Activated CD4-positive, alpha-beta T cell treated with anti-CD3 and anti-CD28 coated beads, Interleukin-2, amount 10 ng/mL, durations not matched to agents 24 days and 14 days (primary cell): ENCODE measurements at regions of chr1 and their contacts with region 1.

Region 1: DNA sequence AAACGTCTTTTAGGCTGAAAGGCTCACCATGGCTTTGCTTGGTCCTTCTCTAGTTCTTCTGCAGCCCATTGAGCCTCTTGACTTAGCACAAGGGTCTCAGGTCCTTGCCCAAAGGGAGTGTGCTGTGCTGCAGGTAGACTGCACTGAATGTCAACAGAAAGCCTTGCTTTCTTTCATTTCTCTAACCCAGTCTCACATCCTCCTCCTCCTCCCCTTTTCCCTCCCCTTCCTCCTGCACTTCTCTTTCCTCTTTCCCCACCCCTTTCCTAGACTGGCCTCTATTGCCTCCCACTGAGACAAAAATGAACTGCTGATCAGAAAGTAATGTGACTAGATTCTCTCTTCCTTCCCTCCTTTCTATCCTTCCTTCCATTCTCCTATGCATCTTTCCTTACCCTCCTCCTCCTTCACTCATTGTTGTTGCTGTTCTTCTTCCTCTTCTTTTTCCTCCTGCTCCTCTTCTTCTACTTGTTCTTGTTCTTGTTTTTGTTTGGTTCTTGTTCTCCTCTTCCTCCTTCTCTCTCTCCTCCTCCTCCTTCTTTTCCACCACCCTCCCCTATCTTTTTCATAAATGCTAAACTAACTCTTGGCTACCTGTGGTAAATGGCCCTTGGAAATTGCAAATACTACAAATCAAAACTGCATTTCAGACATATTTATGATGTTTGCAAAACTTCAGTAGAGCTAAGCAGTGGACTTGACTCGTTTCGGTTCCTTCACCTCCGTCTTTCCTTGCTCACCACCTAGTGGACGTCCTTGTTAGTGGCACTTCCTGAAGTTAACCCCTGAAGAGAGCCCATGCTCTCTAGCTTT is at the start of gene SELL:
- DNase-seq: peak; percentile 94
- H3K4me3 Mint-ChIP-seq: peak within 1 kb of the TSS; percentile 89
- H3K27ac Mint-ChIP-seq: peak within 1 kb of the TSS; percentile 90
- H3K4me1 Mint-ChIP-seq: peaks cover 34% of the 10 kb centered on the region
- H3K27me3 Mint-ChIP-seq: peaks cover 22% of the 10 kb centered on the region
- total RNA-seq, gene SELL: 82.3 and 92.7 TPM in 2 replicates

Region 2: GRCh38 chr1:168466092-168466713 is 1245.5 kb before region 1 on chr1:
- intact Hi-C with region 1: loop called (anchors 5 kb)
- DNase-seq: peak; percentile 75
- H3K4me3 Mint-ChIP-seq: peak overlapping the region; percentile 32
- H3K27ac Mint-ChIP-seq: peak overlapping the region; percentile 71
- H3K4me1 Mint-ChIP-seq: peaks cover 58% of the 10 kb centered on the region
- H3K27me3 Mint-ChIP-seq: no peaks in the 10 kb centered on the region

Region 3: DNA sequence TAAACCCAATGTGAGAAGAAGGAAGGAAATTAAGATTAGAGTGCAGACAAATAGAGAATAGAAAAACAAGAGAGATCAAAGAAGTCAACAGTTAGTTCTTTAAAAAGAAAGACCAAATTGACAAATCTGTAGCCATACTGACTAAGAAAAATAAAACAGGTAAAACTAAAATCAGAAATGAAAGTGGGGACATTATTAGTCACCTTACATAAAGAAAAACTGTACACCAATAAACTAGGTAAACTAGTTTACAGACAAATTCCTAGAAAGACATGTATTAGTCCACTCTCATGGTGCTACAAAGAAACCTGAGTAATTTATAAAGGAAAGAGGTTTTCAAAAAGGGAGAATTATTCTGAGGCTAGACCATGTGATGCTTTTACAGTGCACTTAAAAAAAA is 321.4 kb before region 1 on chr1:
- intact Hi-C with region 1: no loop called
- DNase-seq: no peak
- H3K4me3 Mint-ChIP-seq: no peak overlapping the region
- H3K27ac Mint-ChIP-seq: peak overlapping the region; percentile 16
- H3K4me1 Mint-ChIP-seq: peaks cover 10% of the 10 kb centered on the region
- H3K27me3 Mint-ChIP-seq: no peaks in the 10 kb centered on the region

Region 4: DNA sequence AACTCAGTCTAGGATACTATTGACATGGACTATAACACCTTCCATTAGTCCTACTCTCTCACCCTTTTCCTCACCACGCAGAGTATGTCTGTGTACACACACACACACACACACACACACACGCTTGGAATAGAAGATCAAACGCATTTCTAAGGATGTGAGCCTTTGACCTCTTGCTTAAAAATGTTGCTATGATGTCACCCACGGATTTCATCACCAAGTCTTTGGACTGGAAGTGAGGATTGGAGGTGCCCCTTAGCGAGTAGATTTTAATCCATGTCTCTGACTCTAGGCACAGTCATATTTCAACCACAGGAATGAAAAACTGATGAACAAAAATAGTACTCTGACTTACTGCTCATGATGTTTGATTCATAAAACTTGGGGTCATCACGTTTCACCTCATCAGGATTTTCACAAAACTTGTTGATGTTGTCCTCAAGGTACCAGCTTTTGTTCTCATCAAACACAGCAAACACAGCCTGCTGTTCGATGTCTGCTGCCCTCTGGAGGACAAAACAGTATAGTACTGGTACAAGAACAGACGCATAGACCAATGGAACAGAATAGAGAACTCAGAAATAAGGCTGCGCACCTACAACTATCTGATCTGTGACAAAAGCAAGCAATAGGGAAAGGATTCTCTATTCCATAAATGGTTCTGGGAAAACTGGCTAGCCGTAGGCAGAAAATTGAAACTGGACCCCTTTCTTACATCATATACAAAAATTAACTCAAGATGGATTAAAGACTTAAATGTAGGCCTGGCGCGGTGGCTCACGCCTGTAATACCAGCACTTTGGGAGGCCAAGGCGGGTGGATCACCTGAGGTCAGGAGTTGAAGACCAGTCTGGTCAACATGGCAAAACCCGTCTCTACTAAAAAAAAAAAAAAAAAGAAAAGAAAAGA is 165.3 kb before region 1 on chr1:
- intact Hi-C with region 1: loop called (anchors 1 kb)
- DNase-seq: peak; percentile 90
- H3K4me3 Mint-ChIP-seq: no peak overlapping the region
- H3K27ac Mint-ChIP-seq: no peak overlapping the region
- H3K4me1 Mint-ChIP-seq: peaks cover 19% of the 10 kb centered on the region
- H3K27me3 Mint-ChIP-seq: no peaks in the 10 kb centered on the region

Region 5: DNA sequence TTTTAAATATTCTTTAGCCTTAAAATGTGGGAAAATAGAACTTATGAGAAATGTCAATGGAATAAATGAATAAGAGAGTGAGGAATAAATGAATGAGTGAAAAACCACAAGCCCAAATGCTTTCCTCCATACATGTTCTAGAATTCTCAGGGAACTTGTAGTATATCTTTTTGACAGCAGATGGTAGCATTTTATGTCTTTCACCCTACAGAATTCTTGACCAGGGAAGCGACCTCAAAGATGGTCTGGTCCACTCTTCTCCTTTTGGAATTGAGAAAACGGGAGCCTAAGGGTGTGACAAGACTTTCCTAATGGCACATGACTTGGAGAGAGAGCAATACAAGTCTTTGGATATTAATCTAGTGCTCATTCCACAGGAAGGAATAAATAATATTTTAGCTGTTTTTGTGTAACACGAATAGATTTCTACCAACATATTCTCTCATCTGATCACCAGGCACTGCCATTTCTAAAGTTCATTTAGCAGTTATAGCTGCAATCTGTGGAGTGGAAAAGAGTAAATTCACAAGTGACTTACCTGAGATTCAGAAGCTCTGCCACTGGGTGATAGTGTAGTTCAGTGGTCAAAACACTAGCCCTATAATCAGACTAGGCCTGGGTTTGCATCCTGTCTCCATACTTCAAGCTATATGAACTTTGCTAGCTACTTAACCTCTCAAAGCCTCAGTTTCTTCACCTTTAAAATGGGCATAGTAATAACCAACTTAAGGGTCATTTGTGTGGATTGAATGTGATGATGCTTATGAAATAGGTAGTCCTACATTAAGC is 110.4 kb before region 1 on chr1:
- intact Hi-C with region 1: loop called (anchors 1 kb)
- DNase-seq: peak; percentile 65
- H3K4me3 Mint-ChIP-seq: no peak overlapping the region
- H3K27ac Mint-ChIP-seq: peak overlapping the region; percentile 65
- H3K4me1 Mint-ChIP-seq: peaks cover 45% of the 10 kb centered on the region
- H3K27me3 Mint-ChIP-seq: no peaks in the 10 kb centered on the region

Region 6: DNA sequence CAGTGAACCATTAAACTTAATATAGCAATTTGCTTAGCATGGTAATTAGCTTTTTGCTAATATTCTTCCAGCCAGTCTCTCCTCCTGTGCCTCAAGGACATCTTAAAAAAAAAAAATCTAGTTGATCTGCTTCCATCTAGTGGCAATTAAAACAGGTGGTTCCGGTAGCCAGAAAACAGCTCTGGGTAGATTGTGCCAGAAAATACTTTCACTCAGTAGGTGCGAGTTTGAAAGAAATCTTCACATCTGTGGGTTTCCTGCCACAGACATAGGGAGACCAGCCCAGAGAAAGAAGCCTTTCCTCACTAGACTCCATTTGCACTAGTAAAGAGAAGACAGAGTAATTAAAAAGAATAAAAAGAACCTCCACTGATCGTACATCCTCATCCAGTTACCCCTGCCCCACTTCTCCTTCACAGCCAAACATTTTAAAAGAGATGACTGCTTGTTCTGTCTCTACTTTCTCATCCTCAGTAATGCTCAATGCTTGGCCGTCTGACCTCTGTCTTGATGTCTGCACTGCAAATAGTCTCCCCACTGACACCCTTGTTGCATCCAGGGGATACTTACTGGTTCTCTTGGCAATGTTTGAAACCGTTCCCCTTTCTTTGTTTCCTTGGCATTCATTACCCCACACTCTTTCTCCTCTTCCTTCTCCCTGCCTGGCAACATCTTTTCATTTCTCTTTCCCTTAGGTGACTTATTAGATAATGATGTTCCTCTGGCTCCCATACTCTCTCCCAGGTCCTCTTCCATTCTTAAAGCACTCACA is 17.2 kb before region 1 on chr1:
- intact Hi-C with region 1: loop called (anchors 1 kb)
- DNase-seq: peak; percentile 88
- H3K4me3 Mint-ChIP-seq: peak overlapping the region; percentile 26
- H3K27ac Mint-ChIP-seq: peak overlapping the region; percentile 79
- H3K4me1 Mint-ChIP-seq: peaks cover 84% of the 10 kb centered on the region
- H3K27me3 Mint-ChIP-seq: no peaks in the 10 kb centered on the region

Region 7: GRCh38 chr1:169809370-169810095 is 97.9 kb after region 1 on chr1:
- intact Hi-C with region 1: loop called (anchors 5 kb)
- DNase-seq: peak; percentile 63
- H3K4me3 Mint-ChIP-seq: no peak overlapping the region
- H3K27ac Mint-ChIP-seq: no peak overlapping the region
- H3K4me1 Mint-ChIP-seq: peaks cover 7% of the 10 kb centered on the region
- H3K27me3 Mint-ChIP-seq: no peaks in the 10 kb centered on the region